ENCODE measurements at regions of chr17 and their contacts with region 1.

Region 1: DNA sequence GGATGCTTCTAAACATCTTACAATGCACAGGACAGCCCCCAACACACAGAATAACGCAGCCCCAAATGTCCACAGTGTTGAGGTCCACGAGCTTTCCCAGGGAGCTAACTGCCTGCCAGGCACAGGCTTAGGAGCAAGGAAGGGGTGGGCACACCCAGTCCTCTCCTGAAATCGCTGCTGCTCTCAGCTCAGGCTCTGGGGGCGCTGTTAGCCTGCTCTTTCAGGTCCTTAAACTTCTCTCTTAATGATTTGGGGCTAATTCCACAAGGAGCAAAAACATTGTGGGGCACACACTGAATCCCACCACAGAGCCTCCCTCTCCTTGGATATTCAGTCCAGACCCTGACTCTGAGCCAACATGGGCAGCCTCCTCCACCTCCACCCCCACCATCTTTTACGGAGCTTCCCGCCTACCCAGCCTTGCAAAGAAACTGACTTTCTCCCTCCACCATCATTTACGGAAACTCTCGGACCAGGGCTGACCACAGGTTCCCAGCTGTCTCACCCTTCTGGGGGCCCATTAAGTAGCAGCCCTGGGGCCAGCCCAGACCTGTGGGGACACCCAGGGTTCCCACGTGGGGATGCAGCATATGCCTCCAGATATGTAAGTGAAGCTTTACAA is 1.1 kb downstream of the CD300H start:
- DNase-seq: peak; percentile 31 to 85
- H3K4me3 ChIP-seq: no peak overlapping the region
- H3K27ac ChIP-seq: no peak overlapping the region
- H3K4me1 ChIP-seq: peaks cover 0 to 3% (median 2%) of the 10 kb centered on the region in 4 experiments; a peak in 3 of 7 replicates
- H3K27me3 ChIP-seq: peaks cover 0 to 2% (median 0%) of the 10 kb centered on the region in 4 experiments; a peak in 2 of 7 replicates
- CTCF ChIP-seq: peak; percentile 72 to 95 (median 76)
- EP300 ChIP-seq: no peak
- POLR2A ChIP-seq: no peak
- RAD21 ChIP-seq: peak; percentile 71 to 77

Region 2: GRCh38 chr17:74430706-74431567 is 135.3 kb before region 1 on chr17:
- CTCF ChIA-PET with region 1: no interaction called
- POLR2A ChIA-PET with region 1: no interaction called
- DNase-seq: peak in 1 of 2 experiments; percentile 78
- H3K4me3 ChIP-seq: peak overlapping the region; percentile 52 to 84 (median 79)
- H3K27ac ChIP-seq: no peak overlapping the region
- H3K4me1 ChIP-seq: peaks cover 10 to 42% (median 32%) of the 10 kb centered on the region in 4 experiments
- H3K27me3 ChIP-seq: peaks cover 0 to 22% (median 13%) of the 10 kb centered on the region in 4 experiments; a peak in 5 of 7 replicates
- CTCF ChIP-seq: no peak
- EP300 ChIP-seq: no peak
- POLR2A ChIP-seq: 0 out of 3 replicates have a peak, but pooled peaks of 1 of the 2 experiments have one; percentile 33
- RAD21 ChIP-seq: no peak

Region 3: DNA sequence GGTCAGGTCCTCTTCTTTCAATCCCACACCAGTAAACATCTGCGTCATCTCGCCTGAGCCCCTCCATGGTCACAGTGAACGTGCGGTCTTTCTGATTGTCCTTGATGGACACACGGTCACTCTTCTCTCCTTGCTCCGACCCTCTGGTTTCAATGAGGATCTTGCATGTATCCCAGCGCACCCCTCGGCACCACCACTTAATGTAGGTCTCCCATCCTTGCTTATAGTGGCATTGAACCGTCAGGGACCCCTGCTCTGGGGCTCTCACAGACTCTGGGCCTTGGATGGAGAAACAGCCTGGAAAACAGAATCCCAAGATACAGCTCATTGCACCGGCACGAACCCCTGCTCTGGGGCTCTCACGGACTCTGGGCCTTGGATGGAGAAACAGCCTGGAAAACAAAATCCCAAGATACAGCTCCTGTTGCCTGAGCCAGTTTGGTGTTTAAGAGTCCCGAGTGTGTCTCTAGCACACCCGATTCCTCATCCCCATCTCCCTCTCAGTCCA is 40.4 kb before region 1 on chr17:
- CTCF ChIA-PET with region 1: no interaction called
- POLR2A ChIA-PET with region 1: no interaction called
- DNase-seq: no peak
- H3K4me3 ChIP-seq: no peak overlapping the region
- H3K27ac ChIP-seq: no peak overlapping the region
- H3K4me1 ChIP-seq: no peaks in the 10 kb centered on the region
- H3K27me3 ChIP-seq: peaks cover 0 to 2% (median 0%) of the 10 kb centered on the region in 4 experiments; a peak in 2 of 7 replicates
- CTCF ChIP-seq: no peak
- EP300 ChIP-seq: no peak
- POLR2A ChIP-seq: no peak
- RAD21 ChIP-seq: no peak

Region 4: DNA sequence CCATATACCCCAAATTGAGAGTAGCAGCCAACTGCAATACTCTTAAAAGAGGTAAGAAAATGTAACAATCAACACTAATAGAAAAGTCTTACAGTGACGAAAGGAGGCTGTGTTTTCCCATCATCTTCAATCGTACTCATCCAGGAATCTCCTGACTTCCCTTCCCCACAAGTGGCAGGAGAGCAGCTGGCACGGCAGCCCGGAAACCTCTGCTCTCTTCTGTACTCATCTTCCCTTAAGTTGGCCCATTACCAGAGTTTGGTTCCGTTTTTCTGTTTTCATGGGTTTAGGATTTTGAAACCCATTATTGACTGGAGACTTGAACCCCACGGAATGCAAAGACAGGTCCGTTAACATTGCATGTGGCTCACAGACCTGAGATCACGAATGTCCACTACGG is 12.7 kb after region 1 on chr17:
- CTCF ChIA-PET with region 1: interaction called, 20 read pairs
- POLR2A ChIA-PET with region 1: interaction called, 3 read pairs
- DNase-seq: no peak
- H3K4me3 ChIP-seq: no peak overlapping the region
- H3K27ac ChIP-seq: no peak overlapping the region
- H3K4me1 ChIP-seq: no peaks in the 10 kb centered on the region
- H3K27me3 ChIP-seq: 0 out of 7 replicates have a peak, but pooled peaks cover 0 to 3% (median 0%) of the 10 kb centered on the region in 4 experiments
- CTCF ChIP-seq: no peak
- EP300 ChIP-seq: no peak
- POLR2A ChIP-seq: no peak
- RAD21 ChIP-seq: no peak

Region 5: GRCh38 chr17:74592087-74592990 is 26.1 kb after region 1 on chr17 and contains the start of gene CD300LD:
- CTCF ChIA-PET with region 1: interaction called, 14 read pairs
- POLR2A ChIA-PET with region 1: no interaction called
- DNase-seq: no peak
- H3K4me3 ChIP-seq: no peak within 1 kb of the TSS
- H3K27ac ChIP-seq: no peak within 1 kb of the TSS
- H3K4me1 ChIP-seq: no peaks in the 10 kb centered on the region
- H3K27me3 ChIP-seq: peaks cover 0 to 2% (median under 1%) of the 10 kb centered on the region in 4 experiments; a peak in 4 of 7 replicates
- CTCF ChIP-seq: no peak
- EP300 ChIP-seq: no peak
- POLR2A ChIP-seq: no peak
- RAD21 ChIP-seq: no peak
- total RNA-seq, gene CD300LD: not detected in 2 replicates

Region 6: DNA sequence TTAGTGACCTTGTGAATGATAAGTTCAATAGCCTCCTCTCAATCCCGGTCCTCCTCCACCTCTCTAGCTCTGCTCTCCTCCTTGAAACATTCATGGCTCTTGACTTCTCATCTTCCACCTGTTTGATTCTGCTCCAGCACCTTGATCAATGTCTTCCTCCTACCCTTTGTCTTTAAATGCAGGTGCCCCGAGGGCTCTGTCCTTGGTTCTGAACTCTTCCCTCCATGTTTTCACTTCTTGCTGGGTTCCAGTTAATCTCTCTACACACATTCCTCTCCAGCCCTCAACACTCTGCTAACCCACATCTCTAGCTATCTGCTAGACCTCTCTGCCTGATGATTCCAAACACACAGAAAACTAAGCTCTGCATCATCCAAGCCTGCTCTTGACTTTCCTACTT is 43.9 kb after region 1 on chr17:
- CTCF ChIA-PET with region 1: interaction called, 11 read pairs
- POLR2A ChIA-PET with region 1: no interaction called
- DNase-seq: peak in 1 of 2 experiments; percentile 54
- H3K4me3 ChIP-seq: no peak overlapping the region
- H3K27ac ChIP-seq: no peak overlapping the region
- H3K4me1 ChIP-seq: no peaks in the 10 kb centered on the region
- H3K27me3 ChIP-seq: peaks cover 0 to 7% (median under 1%) of the 10 kb centered on the region in 4 experiments; a peak in 4 of 7 replicates
- CTCF ChIP-seq: no peak
- EP300 ChIP-seq: no peak
- POLR2A ChIP-seq: no peak
- RAD21 ChIP-seq: no peak